ENCODE measurements at regions of chr5 and their contacts with region 1.

Region 1: GRCh38 chr5:86880785-86881492 is 263.2 kb downstream of the COX7C start:
- DNase-seq: peak; percentile 89
- ATAC-seq: peak; percentile 99
- H3K4me3 ChIP-seq: no peak overlapping the region
- H3K27ac ChIP-seq: no peak overlapping the region
- H3K4me1 ChIP-seq: no peaks in the 10 kb centered on the region
- H3K27me3 ChIP-seq: no peaks in the 10 kb centered on the region
- CTCF ChIP-seq: peak; percentile 97
- POLR2A ChIP-seq: no peak
- RAD21 ChIP-seq: peak; percentile 88

Region 2: DNA sequence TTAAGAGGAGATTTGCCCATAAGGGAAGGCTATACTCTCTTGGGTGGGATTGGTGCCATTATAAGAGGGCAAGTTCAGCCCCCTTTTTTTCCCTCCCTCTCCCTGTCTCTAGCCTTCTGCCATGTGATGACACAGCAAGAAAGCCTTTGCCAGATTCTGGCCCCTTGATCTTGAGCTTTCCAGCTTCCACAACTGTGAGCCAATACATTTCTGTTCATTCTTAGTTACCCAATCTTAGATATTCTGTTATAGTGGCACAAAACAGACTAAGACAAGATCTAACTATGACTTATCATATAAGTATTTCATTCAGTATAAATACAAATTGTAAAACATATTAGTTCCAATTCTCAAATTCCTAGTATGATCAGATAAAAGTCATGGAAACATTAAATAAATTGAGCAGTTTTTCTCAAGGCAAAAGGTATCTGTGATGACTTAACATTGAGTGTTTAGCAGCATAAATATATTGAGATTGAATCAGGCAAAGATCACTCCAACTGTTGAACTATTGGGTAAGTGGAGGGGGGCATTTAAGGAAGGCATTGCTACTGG is 13.1 kb after region 1 on chr5:
- CTCF ChIA-PET with region 1: interaction called, 12 read pairs
- POLR2A ChIA-PET with region 1: no interaction called
- dilution Hi-C with region 1: no loop called
- in situ Hi-C with region 1: no loop called
- intact Hi-C with region 1: no loop called
- DNase-seq: peak; percentile 10
- ATAC-seq: peak; percentile 60
- H3K4me3 ChIP-seq: no peak overlapping the region
- H3K27ac ChIP-seq: no peak overlapping the region
- H3K4me1 ChIP-seq: no peaks in the 10 kb centered on the region
- H3K27me3 ChIP-seq: no peaks in the 10 kb centered on the region
- CTCF ChIP-seq: no peak
- POLR2A ChIP-seq: no peak
- RAD21 ChIP-seq: no peak

Region 3: DNA sequence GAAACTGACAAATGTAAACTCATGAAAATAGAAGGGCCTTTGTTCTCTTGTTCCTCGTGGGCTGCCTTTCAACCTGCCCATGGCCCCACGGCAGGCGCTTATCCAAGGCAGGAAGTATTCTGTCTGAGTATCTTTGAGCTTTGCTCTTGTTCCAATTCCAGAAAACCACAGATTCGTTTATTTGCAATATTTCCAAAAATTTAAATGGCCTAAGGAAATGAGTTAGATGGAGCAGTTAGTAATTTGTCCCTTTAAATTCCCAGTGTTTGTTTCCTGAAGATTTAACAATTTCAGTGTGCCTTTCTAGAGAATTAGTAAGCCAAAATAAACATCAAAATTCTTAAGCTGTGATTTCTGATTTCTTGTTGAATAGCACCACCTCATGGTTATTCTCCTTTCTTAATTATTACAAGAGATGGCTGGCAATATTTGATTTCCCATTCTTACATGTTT is 87.4 kb after region 1 on chr5:
- CTCF ChIA-PET with region 1: interaction called, 19 read pairs
- POLR2A ChIA-PET with region 1: no interaction called
- dilution Hi-C with region 1: no loop called
- in situ Hi-C with region 1: no loop called
- intact Hi-C with region 1: loop called (anchors 1 kb)
- DNase-seq: peak; percentile 65
- ATAC-seq: peak; percentile 71
- H3K4me3 ChIP-seq: no peak overlapping the region
- H3K27ac ChIP-seq: no peak overlapping the region
- H3K4me1 ChIP-seq: no peaks in the 10 kb centered on the region
- H3K27me3 ChIP-seq: no peaks in the 10 kb centered on the region
- CTCF ChIP-seq: peak; percentile 65
- POLR2A ChIP-seq: no peak
- RAD21 ChIP-seq: peak; percentile 70

Region 4: DNA sequence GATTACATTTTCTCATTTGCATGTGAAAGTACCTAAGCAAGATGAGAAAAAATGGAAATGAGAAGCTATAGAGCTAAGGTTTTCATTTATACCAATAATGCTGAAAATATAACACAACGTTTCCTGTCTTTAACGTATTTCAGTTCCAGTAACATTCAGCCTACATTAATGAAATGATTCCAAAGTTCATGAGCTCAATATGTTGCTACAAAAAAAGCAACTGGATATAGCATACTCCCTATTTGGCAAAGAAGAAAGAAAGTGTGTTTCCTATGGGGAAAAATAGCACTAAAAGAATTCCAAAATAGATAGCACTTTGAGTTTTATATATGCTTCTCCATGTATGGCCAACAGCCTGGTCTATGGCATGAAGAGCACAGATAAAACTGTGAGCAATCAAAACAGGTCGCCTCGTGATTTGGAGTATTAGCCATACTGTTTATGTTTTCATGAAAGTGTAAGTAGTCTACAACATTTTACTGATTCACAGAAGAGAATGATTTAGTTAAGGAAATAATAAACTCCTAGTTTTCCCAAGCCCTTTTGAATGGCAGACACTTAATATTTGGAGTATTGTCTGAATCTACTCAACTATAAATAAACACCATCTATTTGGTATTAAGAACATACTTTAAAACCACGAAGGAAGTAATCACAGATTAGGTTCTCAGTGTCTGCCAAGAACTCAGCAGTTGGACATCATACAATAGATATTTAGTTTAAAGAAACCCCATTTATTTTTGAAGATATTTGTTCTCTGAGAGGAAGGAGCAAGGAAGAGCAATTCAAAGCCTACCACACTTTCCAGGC is 128.0 kb after region 1 on chr5:
- CTCF ChIA-PET with region 1: interaction called, 7 read pairs
- POLR2A ChIA-PET with region 1: no interaction called
- dilution Hi-C with region 1: no loop called
- in situ Hi-C with region 1: no loop called
- intact Hi-C with region 1: loop called (anchors 1 kb)
- DNase-seq: peak; percentile 24
- ATAC-seq: peak; percentile 65
- H3K4me3 ChIP-seq: no peak overlapping the region
- H3K27ac ChIP-seq: no peak overlapping the region
- H3K4me1 ChIP-seq: peaks cover 2% of the 10 kb centered on the region; the same call in 1 of the 2 replicates
- H3K27me3 ChIP-seq: no peaks in the 10 kb centered on the region
- CTCF ChIP-seq: no peak
- POLR2A ChIP-seq: no peak
- RAD21 ChIP-seq: no peak

Region 5: DNA sequence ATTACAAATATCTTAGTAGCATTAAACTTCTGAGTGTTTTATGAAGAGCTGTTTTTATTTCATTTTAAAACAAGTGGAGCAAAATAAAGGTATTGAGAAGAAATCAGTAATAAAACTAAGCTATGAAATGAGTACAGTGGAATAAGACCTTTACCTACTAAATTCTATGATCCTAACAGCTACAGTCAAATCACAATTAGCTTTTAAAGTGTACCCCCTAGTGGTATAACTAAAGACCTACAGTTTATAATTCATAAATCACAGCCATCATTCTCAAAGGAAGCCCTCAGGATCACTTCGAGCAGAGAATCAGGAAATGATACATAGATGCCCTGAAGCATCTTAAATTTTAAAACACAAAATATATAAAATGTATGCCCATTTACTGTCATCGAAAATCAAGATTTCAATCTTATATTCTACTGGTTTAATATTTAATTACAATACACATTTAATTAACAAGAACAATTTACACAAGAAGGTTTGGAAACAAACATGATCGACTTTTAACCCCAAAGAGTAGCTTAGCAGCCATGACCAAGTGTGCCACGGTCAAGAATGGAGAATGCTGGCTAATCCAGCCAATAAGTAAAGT is 519.5 kb after region 1 on chr5:
- CTCF ChIA-PET with region 1: no interaction called
- POLR2A ChIA-PET with region 1: no interaction called
- dilution Hi-C with region 1: no loop called
- in situ Hi-C with region 1: no loop called
- intact Hi-C with region 1: loop called (anchors 5 kb)
- DNase-seq: peak; percentile 61
- ATAC-seq: peak; percentile 82
- H3K4me3 ChIP-seq: no peak overlapping the region
- H3K27ac ChIP-seq: no peak overlapping the region
- H3K4me1 ChIP-seq: peaks cover 3% of the 10 kb centered on the region
- H3K27me3 ChIP-seq: no peaks in the 10 kb centered on the region
- CTCF ChIP-seq: peak; percentile 65
- POLR2A ChIP-seq: no peak
- RAD21 ChIP-seq: peak; percentile 60